Activated CD8-positive, alpha-beta T cell treated with anti-CD3 and anti-CD28 coated beads for 36 hours (primary cell): ENCODE measurements at regions of chr6 and their contacts with region 1.

Region 1: DNA sequence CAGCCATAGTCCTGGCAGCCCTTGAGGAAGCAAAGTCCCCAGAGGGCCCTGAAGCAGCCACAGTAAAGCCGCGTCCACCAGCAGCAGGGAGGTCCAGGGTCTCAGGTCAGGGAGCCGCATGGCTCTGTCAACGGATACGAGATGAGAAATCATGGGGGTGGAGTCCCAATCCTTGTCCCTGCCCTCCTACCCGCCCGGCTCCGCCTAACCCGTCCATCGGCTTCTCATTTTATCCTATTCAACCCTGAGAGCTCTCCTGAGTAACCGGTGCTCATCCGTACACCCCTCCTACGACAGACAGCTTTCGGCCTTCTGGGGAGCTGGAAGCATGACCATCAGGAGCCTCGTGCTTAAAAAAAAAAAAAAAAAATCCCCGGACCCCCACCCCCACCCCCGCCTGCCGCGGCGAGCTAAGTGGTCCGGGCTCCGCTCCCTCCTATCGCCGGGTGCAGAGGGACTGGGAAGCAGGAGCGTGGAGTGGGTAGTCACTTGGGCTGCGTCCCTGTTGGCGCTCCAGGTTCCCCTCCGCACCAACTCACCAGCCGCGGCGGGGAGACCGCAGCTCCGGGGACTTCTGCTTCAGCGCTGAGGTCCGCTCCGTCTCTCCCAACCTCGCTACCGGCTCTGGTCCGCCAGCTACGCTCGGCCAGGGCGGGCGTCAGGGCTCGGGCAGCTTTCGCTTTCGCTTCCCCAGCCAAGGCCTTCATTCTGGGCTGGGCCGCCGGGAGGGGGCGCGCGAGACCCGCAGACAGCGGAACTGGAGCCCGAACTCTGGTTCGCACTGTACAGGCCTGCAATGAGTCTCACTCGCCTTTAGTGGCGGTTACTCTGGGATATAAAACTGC is at the start of gene TAP2:
- DNase-seq: peak; percentile 98
- ATAC-seq: peak; percentile 82
- H3K4me3 Mint-ChIP-seq: peak within 1 kb of the TSS; percentile 79
- H3K27ac Mint-ChIP-seq: peak within 1 kb of the TSS; percentile 99
- H3K4me1 Mint-ChIP-seq: peaks cover 74% of the 10 kb centered on the region
- H3K27me3 Mint-ChIP-seq: no peaks in the 10 kb centered on the region
- CTCF ChIP-seq: peak; percentile 95
- total RNA-seq, gene TAP2: 110 to 113 TPM

Region 2: DNA sequence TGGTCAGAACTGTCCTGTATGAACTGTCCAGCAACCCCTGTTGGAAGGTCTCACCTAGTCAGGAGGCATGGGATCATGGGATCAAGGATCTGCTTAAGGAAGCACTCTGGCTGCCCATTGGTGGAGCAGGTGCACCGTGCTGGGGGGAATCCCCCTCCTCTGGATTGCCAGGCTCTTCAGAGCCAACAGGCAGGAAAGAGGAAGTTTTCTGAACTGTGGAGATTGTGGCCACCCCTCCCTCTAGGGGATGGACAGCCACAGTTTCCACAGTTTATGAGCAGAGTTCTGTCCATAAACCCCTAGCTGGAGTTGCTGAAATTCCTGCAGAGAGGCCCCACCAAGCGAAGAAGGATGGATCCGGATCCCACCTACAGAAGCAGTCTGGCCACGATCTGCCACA is 158.8 kb before region 1 on chr6:
- CTCF ChIA-PET with region 1: no interaction called
- POLR2A ChIA-PET with region 1: no interaction called
- intact Hi-C with region 1: no loop called
- DNase-seq: no peak
- ATAC-seq: no peak
- H3K4me3 Mint-ChIP-seq: no peak overlapping the region
- H3K27ac Mint-ChIP-seq: no peak overlapping the region
- H3K4me1 Mint-ChIP-seq: peaks cover 3% of the 10 kb centered on the region
- H3K27me3 Mint-ChIP-seq: peaks cover 3% of the 10 kb centered on the region
- CTCF ChIP-seq: no peak

Region 3: DNA sequence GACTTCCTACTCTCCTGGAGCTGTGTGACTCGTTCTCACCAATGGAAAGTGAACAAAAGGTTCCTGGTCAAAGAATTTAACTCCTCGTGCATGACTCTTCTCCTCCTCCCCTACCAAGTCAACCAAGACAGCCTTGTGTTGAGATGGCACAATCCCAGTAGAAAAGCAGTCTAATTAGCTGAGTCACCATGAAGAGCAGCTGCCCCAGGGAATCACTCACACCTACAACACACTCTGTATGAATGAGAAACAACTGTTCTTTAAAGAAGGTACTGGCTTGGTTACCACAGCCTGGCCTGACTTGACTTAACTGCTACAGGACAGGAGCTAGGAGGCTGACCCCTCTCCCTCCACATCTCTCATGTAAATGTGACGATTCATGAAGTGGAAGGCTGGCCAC is 18.6 kb before region 1 on chr6:
- CTCF ChIA-PET with region 1: interaction called, 12 read pairs
- POLR2A ChIA-PET with region 1: interaction called, 25 read pairs
- intact Hi-C with region 1: no loop called
- DNase-seq: no peak
- ATAC-seq: peak; percentile 17
- H3K4me3 Mint-ChIP-seq: no peak overlapping the region
- H3K27ac Mint-ChIP-seq: no peak overlapping the region
- H3K4me1 Mint-ChIP-seq: peaks cover 14% of the 10 kb centered on the region
- H3K27me3 Mint-ChIP-seq: no peaks in the 10 kb centered on the region
- CTCF ChIP-seq: no peak

Region 4: GRCh38 chr6:32825966-32826365 is 12.4 kb before region 1 on chr6:
- CTCF ChIA-PET with region 1: interaction called, 52 read pairs
- POLR2A ChIA-PET with region 1: interaction called, 47 read pairs
- intact Hi-C with region 1: no loop called
- DNase-seq: no peak
- ATAC-seq: no peak
- H3K4me3 Mint-ChIP-seq: no peak overlapping the region
- H3K27ac Mint-ChIP-seq: no peak overlapping the region
- H3K4me1 Mint-ChIP-seq: peaks cover 37% of the 10 kb centered on the region
- H3K27me3 Mint-ChIP-seq: no peaks in the 10 kb centered on the region
- CTCF ChIP-seq: peak; percentile 16

Region 5: DNA sequence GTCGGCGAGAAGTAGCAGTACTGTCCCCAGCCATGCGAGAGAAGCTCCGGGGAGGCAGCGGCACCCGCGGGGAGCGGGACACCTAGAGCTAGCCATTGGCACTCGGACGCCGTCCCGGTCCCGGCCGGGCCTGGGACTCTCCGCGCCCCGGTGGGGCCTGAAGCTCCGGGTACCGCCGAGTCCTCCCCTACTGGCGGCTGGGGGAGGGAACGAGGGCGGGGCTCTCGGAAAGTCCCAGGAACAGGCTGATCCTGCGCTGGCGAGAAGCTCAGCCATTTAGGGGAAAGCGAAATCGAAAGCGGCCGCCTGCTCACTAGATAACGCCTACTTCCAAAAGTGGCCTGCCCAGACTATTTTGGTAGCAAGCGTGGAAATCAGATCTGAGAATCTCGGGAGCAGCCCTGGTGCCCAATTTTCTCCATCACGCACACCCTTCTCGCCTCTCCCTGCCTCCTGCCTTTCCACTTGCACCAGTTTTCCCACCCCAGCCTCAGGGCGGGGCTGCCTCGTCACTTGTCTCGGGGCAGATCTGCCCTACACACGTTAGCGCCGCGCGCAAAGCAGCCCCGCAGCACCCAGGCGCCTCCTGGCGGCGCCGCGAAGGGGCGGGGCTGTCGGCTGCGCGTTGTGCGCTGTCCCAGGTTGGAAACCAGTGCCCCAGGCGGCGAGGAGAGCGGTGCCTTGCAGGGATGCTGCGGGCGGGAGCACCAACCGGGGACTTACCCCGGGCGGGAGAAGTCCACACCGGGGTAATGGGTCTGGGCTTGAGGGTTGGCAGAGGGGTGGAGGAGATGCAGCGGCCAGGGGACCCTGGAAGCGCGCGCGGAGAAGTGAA is 15.4 kb after region 1 on chr6 and contains the starts of genes PSMB9 and TAP1:
- CTCF ChIA-PET with region 1: interaction called, 400 read pairs
- POLR2A ChIA-PET with region 1: interaction called, 458 read pairs
- intact Hi-C with region 1: loop called (anchors 1 kb)
- DNase-seq: peak; percentile 99
- ATAC-seq: peak; percentile 84
- H3K4me3 Mint-ChIP-seq: peak within 1 kb of the TSS; percentile 94
- H3K27ac Mint-ChIP-seq: peak within 1 kb of the TSS; percentile 100
- H3K4me1 Mint-ChIP-seq: peaks cover 52% of the 10 kb centered on the region
- H3K27me3 Mint-ChIP-seq: no peaks in the 10 kb centered on the region
- CTCF ChIP-seq: peak; percentile 67
- total RNA-seq, gene PSMB9: 219 to 229 TPM
- total RNA-seq, gene TAP1: 210 to 211 TPM

Region 6: DNA sequence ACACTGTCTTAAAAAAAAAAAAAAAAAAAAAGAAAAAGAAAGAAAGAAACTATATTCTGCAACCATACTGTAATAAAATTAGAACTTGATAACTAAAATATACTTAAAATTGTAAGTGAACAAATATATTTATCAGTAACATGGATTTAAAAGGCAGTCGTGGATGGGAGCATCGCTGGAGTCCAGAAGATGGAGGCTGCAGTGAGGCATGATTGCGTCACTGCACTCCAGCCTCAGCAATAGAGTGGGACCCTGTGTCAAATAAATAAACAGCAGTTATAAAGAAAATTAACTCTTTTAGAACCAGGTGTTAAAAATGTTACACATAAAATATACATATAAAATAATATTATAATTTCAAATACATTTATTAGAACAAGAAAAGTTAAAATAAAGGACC is 24.4 kb after region 1 on chr6:
- CTCF ChIA-PET with region 1: interaction called, 400 read pairs
- POLR2A ChIA-PET with region 1: interaction called, 458 read pairs
- intact Hi-C with region 1: no loop called
- DNase-seq: no peak
- ATAC-seq: no peak
- H3K4me3 Mint-ChIP-seq: no peak overlapping the region
- H3K27ac Mint-ChIP-seq: no peak overlapping the region
- H3K4me1 Mint-ChIP-seq: peaks cover 56% of the 10 kb centered on the region
- H3K27me3 Mint-ChIP-seq: no peaks in the 10 kb centered on the region
- CTCF ChIP-seq: no peak

Region 7: DNA sequence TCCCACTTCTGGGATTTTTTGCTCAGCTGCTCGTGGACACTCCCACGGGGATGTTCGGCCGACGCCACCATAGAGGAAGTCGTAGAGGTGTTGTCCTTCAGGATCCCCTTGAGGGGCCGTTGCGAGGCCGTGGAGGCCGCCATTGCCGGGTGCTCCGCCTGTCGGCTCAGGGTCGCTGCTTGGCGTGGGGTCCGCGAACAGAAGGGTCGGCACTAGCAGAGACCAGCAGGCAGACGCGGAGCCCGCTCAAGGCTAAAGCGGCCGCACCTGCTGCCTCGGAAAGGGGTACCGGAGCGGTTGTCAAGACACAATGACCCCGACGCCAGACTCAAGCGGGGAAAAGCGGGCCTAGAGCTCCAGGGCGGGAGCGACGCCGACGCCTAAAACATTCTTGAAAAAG is 41.4 kb after region 1 on chr6:
- CTCF ChIA-PET with region 1: interaction called, 29 read pairs
- POLR2A ChIA-PET with region 1: interaction called, 4 read pairs
- intact Hi-C with region 1: no loop called
- DNase-seq: no peak
- ATAC-seq: no peak
- H3K4me3 Mint-ChIP-seq: no peak overlapping the region
- H3K27ac Mint-ChIP-seq: no peak overlapping the region
- H3K4me1 Mint-ChIP-seq: peaks cover 6% of the 10 kb centered on the region
- H3K27me3 Mint-ChIP-seq: no peaks in the 10 kb centered on the region
- CTCF ChIP-seq: no peak

Region 8: GRCh38 chr6:32885698-32886286 is 47.5 kb after region 1 on chr6:
- CTCF ChIA-PET with region 1: interaction called, 29 read pairs
- POLR2A ChIA-PET with region 1: interaction called, 4 read pairs
- intact Hi-C with region 1: no loop called
- DNase-seq: no peak
- ATAC-seq: peak; percentile 70
- H3K4me3 Mint-ChIP-seq: no peak overlapping the region
- H3K27ac Mint-ChIP-seq: no peak overlapping the region
- H3K4me1 Mint-ChIP-seq: peaks cover 6% of the 10 kb centered on the region
- H3K27me3 Mint-ChIP-seq: no peaks in the 10 kb centered on the region
- CTCF ChIP-seq: peak; percentile 74